ENCODE measurements at regions of chr12 and their contacts with region 1.

Region 1: DNA sequence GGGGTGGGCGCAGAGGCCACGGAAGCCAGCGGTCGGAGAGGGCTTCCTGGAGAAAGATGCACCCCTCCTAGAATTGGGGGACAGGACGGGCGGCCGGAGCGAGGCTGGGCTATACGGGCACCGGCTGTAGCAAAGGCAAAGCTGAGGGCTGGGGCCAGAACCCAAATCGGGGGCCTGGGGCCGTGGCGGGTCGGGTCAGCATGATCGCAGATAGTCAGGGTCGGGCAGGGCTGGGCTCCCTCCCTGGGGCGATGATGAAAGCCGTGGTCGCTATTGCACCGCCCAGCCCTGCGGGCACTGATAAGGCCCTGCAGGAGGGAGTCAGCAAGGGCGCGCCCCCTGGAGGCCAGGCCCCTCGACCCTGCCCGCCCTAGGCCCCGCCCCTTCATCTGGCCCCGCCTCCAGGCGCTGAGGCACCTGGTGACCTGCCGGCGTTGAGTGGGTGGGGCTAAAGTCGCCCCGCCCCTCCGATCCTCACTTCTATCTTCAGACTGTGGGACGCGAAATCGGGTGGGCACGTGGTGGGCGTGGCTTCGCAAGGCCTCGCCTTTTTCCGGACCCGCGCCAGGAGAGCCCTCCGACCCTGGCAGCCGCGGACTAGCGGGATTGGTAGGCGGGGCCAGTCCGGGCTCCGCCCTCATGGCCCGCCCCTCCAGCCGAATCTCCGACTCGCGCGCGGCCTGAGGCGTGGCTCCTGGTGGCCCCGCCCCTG is 418 bp upstream of the SH2B3 start:
- DNase-seq: peak; percentile 91 to 96
- ATAC-seq: peak; percentile 92 to 95 (median 93)
- H3K4me3 ChIP-seq: peak overlapping the region; percentile 93
- H3K27ac ChIP-seq: peak overlapping the region; percentile 84
- H3K4me1 ChIP-seq: peaks cover 39% of the 10 kb centered on the region
- H3K27me3 ChIP-seq: peaks cover 0 to 2% (median 0%) of the 10 kb centered on the region in 3 donors
- CTCF ChIP-seq: peak; percentile 45

Region 2: GRCh38 chr12:111268738-111269572 is 136.3 kb before region 1 on chr12:
- intact Hi-C with region 1: no loop called
- DNase-seq: no peak
- ATAC-seq: no peak
- H3K4me3 ChIP-seq: no peak overlapping the region
- H3K27ac ChIP-seq: no peak overlapping the region
- H3K4me1 ChIP-seq: no peaks in the 10 kb centered on the region
- H3K27me3 ChIP-seq: peaks cover 0 to 49% (median 6%) of the 10 kb centered on the region in 3 donors
- CTCF ChIP-seq: peak; percentile 32

Region 3: GRCh38 chr12:111445726-111446581 is 40.6 kb after region 1 on chr12:
- intact Hi-C with region 1: loop called in 1 of 2 experiments (anchors 2 kb)
- DNase-seq: no peak
- ATAC-seq: peak in 3 of 4 donors; percentile 2 to 7 (median 6)
- H3K4me3 ChIP-seq: no peak overlapping the region
- H3K27ac ChIP-seq: peak overlapping the region; percentile 76
- H3K4me1 ChIP-seq: peaks cover 69% of the 10 kb centered on the region
- H3K27me3 ChIP-seq: no peaks in the 10 kb centered on the region
- CTCF ChIP-seq: no peak